ENCODE measurements at regions of chr6 and their contacts with region 1.

Region 1: DNA sequence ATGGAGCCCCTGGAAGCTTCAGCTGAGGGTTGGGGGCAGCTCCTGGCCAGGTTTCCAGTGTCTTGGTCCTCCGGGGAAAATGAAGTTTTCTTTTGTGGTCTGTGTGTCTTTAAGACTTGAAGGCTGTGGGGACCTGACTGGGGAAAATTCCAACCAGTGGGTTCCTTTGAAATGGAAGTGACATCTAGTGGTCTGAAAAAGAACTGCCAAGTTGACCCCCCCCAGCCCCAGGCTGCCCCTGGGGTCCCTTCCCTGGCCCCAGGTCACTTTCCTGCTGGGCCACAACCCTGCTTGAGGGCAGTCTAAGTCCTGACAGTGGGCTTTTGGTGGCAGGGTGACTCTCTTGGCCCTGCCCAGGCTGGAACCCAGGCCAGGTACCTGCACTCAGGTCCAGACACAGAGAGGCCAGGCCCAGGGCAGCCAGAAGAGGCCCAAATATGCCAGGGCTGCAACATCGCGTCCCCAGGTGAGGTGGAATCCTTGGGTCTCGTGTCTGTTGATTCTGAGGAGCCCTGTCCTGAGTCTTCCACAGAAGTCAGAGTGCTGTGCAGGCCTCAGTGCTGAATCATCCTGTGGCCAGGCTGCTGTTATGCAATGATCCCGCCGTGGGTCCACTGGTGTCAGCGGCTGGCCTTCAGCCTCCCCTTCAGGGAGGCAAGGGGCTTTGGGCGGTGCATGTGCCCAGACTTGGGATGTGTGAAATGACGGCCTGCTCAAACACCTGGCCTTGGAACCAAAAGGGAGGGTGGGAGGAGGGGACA is 68.4 kb downstream of the VEGFA start:
- DNase-seq: peak; percentile 18 to 40
- ATAC-seq: peak; percentile 34 to 86 (median 72)
- H3K4me3 ChIP-seq: no peak overlapping the region
- H3K27ac ChIP-seq: peak overlapping the region in 6 of 10 donors; percentile 12 to 67 (median 46)
- H3K4me1 ChIP-seq: peaks cover 0 to 16% (median 10%) of the 10 kb centered on the region in 9 donors
- H3K27me3 ChIP-seq: no peaks in the 10 kb centered on the region
- CTCF ChIP-seq: peak in 8 of 9 donors; percentile 40 to 64 (median 56)

Region 2: DNA sequence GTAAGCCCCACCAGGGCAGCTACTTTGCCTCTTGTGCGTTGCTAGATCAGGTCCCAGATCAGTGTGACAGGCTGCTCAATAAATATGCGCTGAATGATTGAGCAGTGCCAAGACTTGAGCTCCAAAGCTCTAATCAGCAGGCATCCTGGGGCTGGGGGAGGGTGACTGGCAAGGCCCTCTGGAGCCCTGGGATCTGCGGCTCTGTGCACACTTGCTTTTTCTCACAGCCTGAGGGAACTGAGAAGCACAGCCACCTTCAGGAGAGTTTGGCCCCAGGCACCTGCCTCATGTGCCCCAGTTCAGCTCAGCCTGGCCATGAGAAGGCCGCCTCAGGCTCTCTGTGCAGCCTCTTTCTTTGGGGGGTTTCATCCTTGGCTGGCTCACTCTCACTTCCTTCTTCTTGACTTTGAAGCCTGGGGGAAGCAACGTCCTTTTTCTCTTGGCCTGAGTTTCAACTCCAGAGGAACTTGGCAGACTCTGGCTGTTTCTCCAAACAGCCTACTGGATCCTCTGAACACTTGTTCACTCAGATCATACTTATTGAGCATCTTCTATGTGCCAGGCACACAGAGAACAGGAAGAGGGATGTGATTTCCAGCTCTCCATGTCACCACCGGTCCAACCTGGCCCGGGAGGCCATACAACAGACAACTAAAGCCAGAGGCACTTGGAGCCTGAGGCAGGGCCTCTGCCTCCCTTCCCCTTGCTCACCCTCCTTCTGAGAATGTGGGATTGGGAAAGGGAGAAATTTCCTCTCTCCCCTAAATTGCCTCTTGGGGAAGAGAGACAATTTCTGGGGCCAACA is 45.6 kb after region 1 on chr6:
- intact Hi-C with region 1: no loop called
- DNase-seq: no peak
- ATAC-seq: peak in 5 of 8 donors; percentile 12 to 50 (median 31)
- H3K4me3 ChIP-seq: no peak overlapping the region
- H3K27ac ChIP-seq: peak overlapping the region in 4 of 10 donors; percentile 35 to 87 (median 50)
- H3K4me1 ChIP-seq: peaks cover 0 to 25% (median 4%) of the 10 kb centered on the region in 9 donors
- H3K27me3 ChIP-seq: no peaks in the 10 kb centered on the region
- CTCF ChIP-seq: no peak

Region 3: DNA sequence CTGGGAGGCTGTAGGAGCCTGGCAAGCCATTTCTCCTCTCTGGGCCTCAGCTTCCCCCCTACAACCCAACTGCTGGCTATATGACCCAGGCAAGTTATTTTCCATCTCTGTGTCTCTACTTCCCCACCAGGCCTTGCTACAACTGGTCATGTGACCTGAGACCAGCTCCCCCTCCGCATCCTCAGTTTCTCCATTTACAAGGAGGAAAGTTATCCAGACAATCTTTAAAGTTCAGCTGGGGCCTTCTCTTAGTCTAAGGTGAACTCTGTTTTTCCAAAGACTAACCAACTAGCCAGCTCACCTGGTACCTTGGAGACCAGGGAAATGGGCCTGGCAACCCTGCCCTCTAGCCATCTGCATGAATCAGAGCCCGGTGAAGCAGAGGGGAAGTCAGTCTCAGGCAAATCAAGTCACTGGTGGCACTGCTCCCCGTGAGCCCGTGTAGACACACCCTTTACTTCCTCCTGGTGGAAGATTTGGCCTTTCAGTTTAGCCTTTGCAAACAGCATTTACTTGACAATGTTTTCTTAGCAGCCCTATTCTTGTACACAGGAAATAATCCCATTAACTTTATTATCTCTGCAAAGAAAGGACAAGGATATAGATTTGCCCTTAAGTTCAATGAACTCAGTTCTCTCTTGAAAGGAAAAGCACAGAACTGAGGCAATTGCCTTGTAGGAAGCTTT is 89.2 kb after region 1 on chr6:
- intact Hi-C with region 1: no loop called
- DNase-seq: no peak
- ATAC-seq: no peak
- H3K4me3 ChIP-seq: no peak overlapping the region
- H3K27ac ChIP-seq: no peak overlapping the region
- H3K4me1 ChIP-seq: peaks cover 0 to 35% (median 0%) of the 10 kb centered on the region in 9 donors
- H3K27me3 ChIP-seq: no peaks in the 10 kb centered on the region
- CTCF ChIP-seq: no peak

Region 4: GRCh38 chr6:44064089-44064947 is 225.9 kb after region 1 on chr6:
- intact Hi-C with region 1: loop called in 1 of 10 experiments (anchors 10 kb)
- DNase-seq: peak in 1 of 2 donors; percentile 70
- ATAC-seq: peak; percentile 11 to 84 (median 54)
- H3K4me3 ChIP-seq: no peak overlapping the region
- H3K27ac ChIP-seq: peak overlapping the region in 8 of 10 donors; percentile 40 to 97 (median 75)
- H3K4me1 ChIP-seq: peaks cover 21 to 79% (median 56%) of the 10 kb centered on the region in 9 donors
- H3K27me3 ChIP-seq: no peaks in the 10 kb centered on the region
- CTCF ChIP-seq: no peak

Measured in heart right ventricle (tissue), 16 donors.